ENCODE measurements at regions of chr12 and their contacts with region 1.

Region 1: GRCh38 chr12:68871921-68872320 is 61.0 kb downstream of the CPM start:
- DNase-seq: no peak
- H3K4me3 ChIP-seq: no peak overlapping the region
- H3K27ac ChIP-seq: no peak overlapping the region
- H3K4me1 ChIP-seq: no peaks in the 10 kb centered on the region
- H3K27me3 ChIP-seq: no peaks in the 10 kb centered on the region
- CTCF ChIP-seq: peak in 1 of 5 experiments; percentile 5
- EP300 ChIP-seq: no peak
- POLR2A ChIP-seq: no peak

Region 2: DNA sequence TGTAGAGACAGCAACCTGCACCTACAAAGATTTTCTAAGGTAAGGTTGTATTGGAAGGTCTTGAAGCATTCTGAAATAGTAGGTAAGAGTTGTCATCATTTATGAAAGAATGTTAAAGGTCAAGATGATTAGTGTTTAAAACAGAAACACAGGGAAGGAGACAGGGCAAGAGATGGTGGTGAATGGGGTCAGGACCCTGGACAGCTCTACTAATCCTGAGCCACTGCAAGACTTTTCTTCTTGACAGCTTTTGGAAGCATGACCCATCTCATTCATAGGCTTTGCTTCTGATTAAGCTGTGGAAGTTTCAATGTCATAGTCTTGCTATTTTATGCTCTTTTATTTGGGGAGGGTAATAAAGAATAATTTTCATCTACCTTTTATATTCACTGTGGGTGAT is 1678.2 kb before region 1 on chr12:
- in situ Hi-C with region 1: no loop called
- intact Hi-C with region 1: loop called (anchors 5 kb)
- DNase-seq: no peak
- H3K4me3 ChIP-seq: no peak overlapping the region
- H3K27ac ChIP-seq: no peak overlapping the region
- H3K4me1 ChIP-seq: no peaks in the 10 kb centered on the region
- H3K27me3 ChIP-seq: no peaks in the 10 kb centered on the region
- CTCF ChIP-seq: no peak
- EP300 ChIP-seq: no peak
- POLR2A ChIP-seq: no peak

Region 3: DNA sequence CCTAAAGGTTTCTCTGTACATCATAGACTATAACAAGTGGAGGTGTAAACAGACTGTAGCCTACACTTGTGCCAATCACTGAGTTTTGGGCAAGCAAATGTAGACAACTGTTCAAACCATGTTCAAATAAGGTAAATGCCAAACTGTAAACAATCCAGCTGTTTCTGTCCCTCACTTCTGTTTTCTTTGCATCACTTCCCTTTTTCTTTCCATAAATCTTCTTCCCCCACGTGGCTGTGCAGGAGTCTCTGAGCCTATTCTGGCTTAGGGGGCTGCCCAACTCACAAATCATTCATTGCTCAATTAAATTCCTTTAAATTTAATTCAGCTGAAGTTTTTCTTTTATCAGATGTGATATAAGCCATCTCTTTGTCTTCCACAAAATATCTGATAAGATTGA is 126.1 kb after region 1 on chr12:
- in situ Hi-C with region 1: no loop called
- intact Hi-C with region 1: no loop called
- DNase-seq: no peak
- H3K4me3 ChIP-seq: no peak overlapping the region
- H3K27ac ChIP-seq: no peak overlapping the region
- H3K4me1 ChIP-seq: peaks cover 0 to 6% (median 3%) of the 10 kb centered on the region in 4 donors
- H3K27me3 ChIP-seq: no peaks in the 10 kb centered on the region
- CTCF ChIP-seq: no peak
- EP300 ChIP-seq: no peak
- POLR2A ChIP-seq: no peak

Region 4: DNA sequence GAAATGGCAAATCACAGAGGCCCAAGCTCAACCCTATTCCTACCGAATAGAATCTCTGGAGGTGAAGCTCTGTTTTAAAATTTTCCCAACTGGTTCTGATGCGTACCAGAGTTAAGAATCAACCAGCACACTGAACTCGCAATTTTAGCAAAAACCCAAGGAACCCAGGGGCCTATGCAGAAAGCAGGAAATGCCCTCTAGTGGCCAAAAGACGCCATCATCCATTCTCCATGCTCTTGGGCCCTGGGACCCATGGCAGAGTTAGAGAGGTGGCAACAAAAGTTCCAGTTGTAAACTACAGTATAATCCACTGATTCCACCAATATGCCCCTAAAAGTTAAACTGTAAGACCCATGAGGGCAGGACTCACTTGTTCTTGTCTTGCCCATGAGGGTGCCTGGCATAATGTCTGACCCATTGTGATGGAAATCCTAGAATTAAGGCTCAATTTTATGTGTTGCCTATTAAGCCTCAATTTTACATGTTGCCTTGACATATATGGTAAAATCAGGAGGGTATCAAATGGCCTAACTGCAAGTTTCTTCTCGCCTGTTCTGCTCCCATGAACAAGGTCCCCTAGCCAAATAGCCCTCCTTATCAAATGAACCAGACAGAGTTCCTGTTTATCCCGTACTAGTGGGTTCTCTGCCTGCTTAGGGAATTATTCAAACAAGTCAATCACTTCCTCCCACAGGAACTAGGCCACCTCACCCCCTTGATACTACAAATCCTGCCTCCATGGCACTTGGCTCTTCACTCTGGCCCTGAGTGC is 198.6 kb after region 1 on chr12:
- in situ Hi-C with region 1: loop called in 1 of 4 experiments (anchors 25 kb)
- intact Hi-C with region 1: no loop called
- DNase-seq: peak; percentile 75
- H3K4me3 ChIP-seq: no peak overlapping the region
- H3K27ac ChIP-seq: peak overlapping the region in 1 of 4 donors; percentile 6
- H3K4me1 ChIP-seq: peaks cover 0 to 20% (median 14%) of the 10 kb centered on the region in 4 donors
- H3K27me3 ChIP-seq: no peaks in the 10 kb centered on the region
- CTCF ChIP-seq: peak; percentile 84 to 89 (median 86)
- EP300 ChIP-seq: no peak
- POLR2A ChIP-seq: no peak

Measured in transverse colon (tissue), 4 donors.